ENCODE measurements at regions of chr18 and their contacts with region 1.

Region 1: GRCh38 chr18:49561289-49562193 is at the start of gene LIPG:
- DNase-seq: no peak
- ATAC-seq: peak; percentile 53
- total RNA-seq, gene LIPG: 0.19 TPM

Region 2: GRCh38 chr18:49368876-49369440 is 192.6 kb before region 1 on chr18:
- intact Hi-C with region 1: no loop called
- DNase-seq: no peak
- ATAC-seq: peak; percentile 55

Region 3: GRCh38 chr18:49618742-49619681 is 57.5 kb after region 1 on chr18:
- intact Hi-C with region 1: no loop called
- DNase-seq: peak; percentile 56
- ATAC-seq: peak; percentile 55

Region 4: DNA sequence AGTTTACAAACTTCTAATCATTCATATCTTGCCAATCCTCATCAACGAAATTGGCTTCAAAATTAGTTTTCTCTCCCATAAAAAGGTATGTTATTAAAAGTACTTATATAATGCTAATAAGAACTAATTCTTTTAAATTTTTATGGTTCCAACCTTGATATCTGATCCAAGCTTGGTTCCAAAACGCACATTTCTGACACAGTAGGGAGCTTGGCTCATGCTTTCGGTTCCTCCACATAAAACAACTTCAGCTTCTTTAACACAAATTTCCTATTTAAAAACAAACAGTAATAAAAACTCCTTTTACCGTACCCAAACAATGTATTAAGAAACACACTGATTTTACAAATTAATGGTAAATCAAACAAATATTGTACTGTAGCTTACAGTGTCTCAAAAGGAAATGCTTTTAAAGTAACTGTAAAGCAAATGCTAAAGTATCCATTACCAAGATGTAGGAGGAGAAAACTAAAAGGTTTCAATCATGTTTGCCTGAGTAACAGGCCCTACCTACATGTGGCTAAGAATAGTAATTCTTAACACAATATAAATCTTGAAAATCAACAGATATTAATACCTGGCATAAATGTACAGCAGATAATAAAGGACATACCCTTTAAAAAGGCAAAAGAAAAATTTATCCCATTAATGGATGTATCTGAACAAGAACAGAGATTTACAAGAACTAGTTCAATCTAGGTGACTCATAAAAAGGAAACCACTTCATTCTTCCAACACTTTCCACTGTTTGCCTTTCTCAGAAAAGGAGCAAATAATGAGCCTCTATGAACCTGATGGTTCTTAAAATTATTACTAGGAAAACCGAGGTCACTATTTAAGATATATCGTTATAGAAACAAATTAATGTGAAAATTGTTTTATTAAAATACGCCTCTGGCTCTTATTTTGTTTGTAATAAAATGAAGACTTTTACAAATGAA is 234.3 kb after region 1 on chr18:
- intact Hi-C with region 1: loop called (anchors 10 kb)
- DNase-seq: no peak
- ATAC-seq: no peak

Region 5: DNA sequence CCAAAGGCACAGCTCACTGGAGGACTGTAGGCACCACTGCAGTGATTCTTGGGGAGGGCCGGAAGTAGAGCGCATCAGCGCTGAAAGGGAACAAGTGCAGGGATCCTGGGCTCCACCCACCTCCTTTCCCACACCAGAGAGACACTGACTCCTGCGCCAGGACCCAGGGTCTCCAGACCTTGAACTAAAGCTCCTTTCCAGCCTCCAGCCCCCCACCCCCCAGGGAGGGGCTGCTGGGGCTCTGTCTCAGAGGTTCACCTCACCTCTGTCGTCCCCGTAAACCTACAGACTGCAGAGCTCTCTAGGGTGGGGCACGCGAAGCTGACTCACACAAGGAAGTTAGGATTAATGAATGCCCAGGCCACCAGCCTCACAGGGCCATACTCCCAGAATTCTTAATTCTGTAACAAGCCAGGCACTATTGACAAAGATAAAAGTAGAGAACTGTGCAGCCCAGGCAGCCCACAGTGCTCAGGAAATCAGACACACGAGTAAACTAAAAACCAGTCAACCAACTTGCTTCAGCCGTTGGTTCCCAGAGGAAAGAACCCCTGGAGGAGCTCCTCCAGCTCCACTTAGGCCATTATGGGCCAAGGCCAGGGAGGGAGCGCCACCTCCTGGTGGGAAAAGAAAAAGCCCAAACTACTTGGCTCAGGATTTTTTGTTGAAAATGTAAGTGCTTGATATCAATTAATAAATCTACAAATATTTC is 296.9 kb after region 1 on chr18:
- intact Hi-C with region 1: loop called (anchors 5 kb)
- DNase-seq: peak; percentile 58
- ATAC-seq: peak; percentile 76